ENCODE measurements at regions of chr4 and their contacts with region 1.

Region 1: GRCh38 chr4:186107947-186108346 is 3.4 kb downstream of the FAM149A start:
- DNase-seq: no peak
- ATAC-seq: no peak
- H3K4me3 Mint-ChIP-seq: no peak overlapping the region
- H3K27ac Mint-ChIP-seq: no peak overlapping the region
- H3K4me1 Mint-ChIP-seq: peaks cover 7% of the 10 kb centered on the region
- H3K27me3 Mint-ChIP-seq: peaks cover 35% of the 10 kb centered on the region

Region 2: DNA sequence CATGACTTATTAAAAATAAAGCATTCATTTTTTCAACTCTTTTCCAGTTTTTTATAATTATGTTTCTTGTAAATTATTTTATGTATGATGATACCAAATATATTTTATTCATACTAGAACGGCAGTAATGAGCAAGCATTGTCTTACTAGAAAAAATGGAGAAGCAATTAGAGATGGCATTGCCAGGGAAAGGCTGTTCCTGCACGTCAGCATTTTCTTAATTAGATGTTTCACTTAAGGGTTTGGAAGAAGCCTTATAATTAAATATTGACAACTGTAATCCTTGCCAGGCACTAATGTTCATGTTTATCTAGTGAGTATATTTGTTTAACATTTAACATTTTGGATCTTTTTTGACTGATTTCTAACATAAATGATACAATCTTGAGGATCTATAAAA is 13.1 kb after region 1 on chr4:
- CTCF ChIA-PET with region 1: no interaction called
- POLR2A ChIA-PET with region 1: no interaction called
- intact Hi-C with region 1: loop called in 1 of 2 experiments (anchors 1 kb)
- DNase-seq: no peak
- ATAC-seq: no peak
- H3K4me3 Mint-ChIP-seq: no peak overlapping the region
- H3K27ac Mint-ChIP-seq: no peak overlapping the region
- H3K4me1 Mint-ChIP-seq: no peaks in the 10 kb centered on the region
- H3K27me3 Mint-ChIP-seq: peaks cover 21% of the 10 kb centered on the region

Measured in activated CD4-positive, alpha-beta T cell treated with anti-CD3 and anti-CD28 coated beads for 36 hours (primary cell).